ENCODE measurements at regions of chr5 and their contacts with region 1.

Region 1: DNA sequence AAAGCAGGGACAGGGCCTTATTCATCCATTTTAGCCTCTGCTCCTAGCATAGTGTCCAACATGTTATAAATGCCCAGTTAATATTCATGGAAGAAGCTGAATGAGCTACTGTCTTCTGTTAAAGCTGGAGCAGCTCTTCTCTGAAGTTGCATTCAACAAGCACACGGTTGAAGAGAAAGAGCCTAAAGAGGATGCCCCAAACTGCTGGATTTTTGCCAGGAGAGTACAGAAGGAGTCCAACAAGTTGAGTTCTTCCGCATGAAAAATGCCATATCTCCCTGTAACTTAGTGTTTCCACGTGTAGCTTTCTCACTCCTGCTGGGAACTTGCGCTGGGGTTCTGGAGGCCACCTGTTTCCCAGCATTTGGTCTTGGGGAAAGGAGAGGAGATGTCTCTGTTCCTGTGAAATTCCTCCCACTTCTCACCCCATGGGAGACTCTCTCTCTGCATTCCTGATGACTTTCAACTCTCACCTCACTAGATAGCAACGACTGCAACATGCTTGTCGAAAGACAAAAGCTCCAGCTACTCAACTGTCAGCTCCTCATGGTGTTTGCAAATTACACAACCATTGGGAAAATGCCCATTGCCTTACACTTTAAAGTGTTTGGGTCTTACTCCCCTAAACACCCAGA is 122.8 kb downstream of the KIF4B start:
- DNase-seq: no peak
- H3K4me3 Mint-ChIP-seq: no peak overlapping the region
- H3K27ac Mint-ChIP-seq: no peak overlapping the region
- H3K4me1 Mint-ChIP-seq: peaks cover 9% of the 10 kb centered on the region
- H3K27me3 Mint-ChIP-seq: no peaks in the 10 kb centered on the region
- CTCF ChIP-seq: no peak

Region 2: DNA sequence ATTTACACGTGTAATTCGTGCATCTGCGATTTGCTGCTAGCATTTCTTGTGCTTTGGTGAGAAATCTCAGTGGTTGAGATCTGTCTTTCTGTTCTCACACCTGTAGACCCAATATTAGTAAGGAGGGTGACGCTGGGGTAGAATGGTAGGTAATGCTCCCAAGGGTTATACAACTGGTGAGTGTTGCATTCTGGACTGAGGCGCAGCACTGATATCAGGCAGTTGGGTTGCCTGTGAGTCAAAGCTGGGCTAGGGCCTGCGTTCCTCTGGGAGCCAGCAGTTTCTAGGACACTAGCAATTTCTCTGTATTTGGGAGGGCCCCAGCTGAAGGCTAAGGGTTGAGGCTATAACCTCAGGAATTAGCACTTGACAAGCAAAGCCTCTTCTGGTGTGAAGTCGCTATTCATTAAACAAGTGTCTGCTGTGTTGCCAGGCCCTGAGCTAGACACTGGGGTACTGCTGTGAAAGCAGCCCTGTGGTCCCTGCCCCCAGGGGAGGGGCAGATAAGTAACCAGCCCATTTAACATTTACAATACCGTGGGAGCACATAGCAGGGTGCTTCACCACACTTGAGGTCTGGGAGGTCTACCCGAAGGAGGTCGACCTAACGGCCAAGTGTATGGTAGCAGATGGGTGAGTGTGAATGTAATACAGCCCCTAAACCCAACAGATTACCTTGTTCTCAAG is 352.4 kb before region 1 on chr5:
- CTCF ChIA-PET with region 1: no interaction called
- POLR2A ChIA-PET with region 1: no interaction called
- intact Hi-C with region 1: no loop called
- DNase-seq: no peak
- H3K4me3 Mint-ChIP-seq: no peak overlapping the region
- H3K27ac Mint-ChIP-seq: peak overlapping the region; percentile 73
- H3K4me1 Mint-ChIP-seq: peaks cover 43% of the 10 kb centered on the region
- H3K27me3 Mint-ChIP-seq: no peaks in the 10 kb centered on the region
- CTCF ChIP-seq: no peak

Region 3: GRCh38 chr5:155103146-155103545 is 33.2 kb before region 1 on chr5:
- CTCF ChIA-PET with region 1: no interaction called
- POLR2A ChIA-PET with region 1: no interaction called
- intact Hi-C with region 1: no loop called
- DNase-seq: peak; percentile 28
- H3K4me3 Mint-ChIP-seq: no peak overlapping the region
- H3K27ac Mint-ChIP-seq: no peak overlapping the region
- H3K4me1 Mint-ChIP-seq: peaks cover 6% of the 10 kb centered on the region
- H3K27me3 Mint-ChIP-seq: no peaks in the 10 kb centered on the region
- CTCF ChIP-seq: no peak

Region 4: DNA sequence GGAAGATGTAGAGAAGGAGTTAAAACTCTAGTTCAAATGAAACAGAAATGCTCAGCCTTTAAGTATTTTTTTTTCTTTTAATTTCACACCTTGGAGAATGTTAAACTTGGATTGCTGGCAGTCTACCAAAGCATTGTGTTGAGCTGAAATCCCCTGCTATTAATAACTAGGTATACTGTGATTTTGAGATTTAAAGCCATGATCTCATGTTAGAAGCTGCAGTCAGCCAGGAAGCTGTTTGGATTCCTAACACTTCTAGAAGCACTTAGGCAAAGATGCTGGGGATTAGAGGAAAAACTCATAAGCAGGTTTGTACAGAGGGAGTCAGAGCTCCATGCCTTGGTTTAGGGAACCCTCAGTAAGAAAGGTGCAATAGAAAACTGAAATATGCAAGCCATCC is 18.6 kb after region 1 on chr5:
- CTCF ChIA-PET with region 1: interaction called, 10 read pairs
- POLR2A ChIA-PET with region 1: no interaction called
- intact Hi-C with region 1: no loop called
- DNase-seq: no peak
- H3K4me3 Mint-ChIP-seq: no peak overlapping the region
- H3K27ac Mint-ChIP-seq: no peak overlapping the region
- H3K4me1 Mint-ChIP-seq: no peaks in the 10 kb centered on the region
- H3K27me3 Mint-ChIP-seq: no peaks in the 10 kb centered on the region
- CTCF ChIP-seq: no peak

Region 5: DNA sequence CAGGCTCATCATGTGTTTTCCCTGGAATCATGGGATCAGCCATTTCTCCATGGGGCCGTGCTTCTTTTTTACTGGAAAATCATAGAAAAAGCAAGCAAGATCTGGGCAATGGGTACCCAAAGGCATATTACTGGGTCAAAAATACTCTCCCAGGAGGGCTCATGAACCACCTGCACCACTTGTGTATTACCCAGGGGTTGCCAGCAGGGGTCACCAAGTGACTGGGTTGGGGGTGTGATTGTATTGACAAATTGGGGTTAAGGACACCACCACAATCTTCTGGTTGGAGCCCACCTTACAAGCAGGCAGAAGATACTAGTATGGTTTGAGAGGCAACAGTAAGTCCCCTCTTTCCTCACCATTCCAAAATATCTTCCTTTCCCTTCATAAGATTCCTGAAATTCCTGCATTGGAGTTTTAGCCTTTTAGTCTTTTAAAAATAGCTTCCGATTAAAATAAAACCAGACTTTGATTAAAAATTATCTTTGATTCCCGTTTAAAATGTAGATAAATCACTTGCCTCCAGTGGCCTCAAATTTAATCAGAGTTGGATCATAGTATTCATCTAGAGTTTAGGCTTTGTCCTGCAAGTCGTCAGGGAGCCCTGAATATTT is 480.6 kb after region 1 on chr5:
- CTCF ChIA-PET with region 1: interaction called, 5 read pairs
- POLR2A ChIA-PET with region 1: no interaction called
- intact Hi-C with region 1: loop called (anchors 1 kb)
- DNase-seq: peak; percentile 33
- H3K4me3 Mint-ChIP-seq: no peak overlapping the region
- H3K27ac Mint-ChIP-seq: no peak overlapping the region
- H3K4me1 Mint-ChIP-seq: no peaks in the 10 kb centered on the region
- H3K27me3 Mint-ChIP-seq: no peaks in the 10 kb centered on the region
- CTCF ChIP-seq: peak; percentile 99

Region 6: GRCh38 chr5:155827949-155828348 is 691.6 kb after region 1 on chr5:
- CTCF ChIA-PET with region 1: interaction called, 13 read pairs
- POLR2A ChIA-PET with region 1: no interaction called
- intact Hi-C with region 1: loop called (anchors 10 kb)
- DNase-seq: no peak
- H3K4me3 Mint-ChIP-seq: no peak overlapping the region
- H3K27ac Mint-ChIP-seq: no peak overlapping the region
- H3K4me1 Mint-ChIP-seq: no peaks in the 10 kb centered on the region
- H3K27me3 Mint-ChIP-seq: no peaks in the 10 kb centered on the region
- CTCF ChIP-seq: no peak

Region 7: GRCh38 chr5:156824800-156825199 is 1688.5 kb after region 1 on chr5:
- CTCF ChIA-PET with region 1: interaction called, 16 read pairs
- POLR2A ChIA-PET with region 1: no interaction called
- intact Hi-C with region 1: loop called (anchors 2 kb)
- DNase-seq: peak; percentile 8
- H3K4me3 Mint-ChIP-seq: no peak overlapping the region
- H3K27ac Mint-ChIP-seq: no peak overlapping the region
- H3K4me1 Mint-ChIP-seq: peaks cover 4% of the 10 kb centered on the region
- H3K27me3 Mint-ChIP-seq: no peaks in the 10 kb centered on the region
- CTCF ChIP-seq: peak; percentile 84

Measured in MCF 10A (cell line).